Heart right ventricle (tissue), 16 donors: ENCODE measurements at regions of chr5 and their contacts with region 1.

Region 1: GRCh38 chr5:141320225-141321169 is at the start of gene TAF7:
- DNase-seq: peak; percentile 90 to 93
- ATAC-seq: peak; percentile 99 to 100 (median 100)
- H3K4me3 ChIP-seq: peak within 1 kb of the TSS; percentile 56 to 96 (median 72)
- H3K27ac ChIP-seq: peak within 1 kb of the TSS; percentile 87 to 99 (median 92)
- H3K4me1 ChIP-seq: peaks cover 0 to 23% (median 13%) of the 10 kb centered on the region in 9 donors
- H3K27me3 ChIP-seq: no peaks in the 10 kb centered on the region
- CTCF ChIP-seq: peak; percentile 79 to 92 (median 87)
- total RNA-seq, gene TAF7: 93.4 to 111 (median 107) TPM

Region 2: DNA sequence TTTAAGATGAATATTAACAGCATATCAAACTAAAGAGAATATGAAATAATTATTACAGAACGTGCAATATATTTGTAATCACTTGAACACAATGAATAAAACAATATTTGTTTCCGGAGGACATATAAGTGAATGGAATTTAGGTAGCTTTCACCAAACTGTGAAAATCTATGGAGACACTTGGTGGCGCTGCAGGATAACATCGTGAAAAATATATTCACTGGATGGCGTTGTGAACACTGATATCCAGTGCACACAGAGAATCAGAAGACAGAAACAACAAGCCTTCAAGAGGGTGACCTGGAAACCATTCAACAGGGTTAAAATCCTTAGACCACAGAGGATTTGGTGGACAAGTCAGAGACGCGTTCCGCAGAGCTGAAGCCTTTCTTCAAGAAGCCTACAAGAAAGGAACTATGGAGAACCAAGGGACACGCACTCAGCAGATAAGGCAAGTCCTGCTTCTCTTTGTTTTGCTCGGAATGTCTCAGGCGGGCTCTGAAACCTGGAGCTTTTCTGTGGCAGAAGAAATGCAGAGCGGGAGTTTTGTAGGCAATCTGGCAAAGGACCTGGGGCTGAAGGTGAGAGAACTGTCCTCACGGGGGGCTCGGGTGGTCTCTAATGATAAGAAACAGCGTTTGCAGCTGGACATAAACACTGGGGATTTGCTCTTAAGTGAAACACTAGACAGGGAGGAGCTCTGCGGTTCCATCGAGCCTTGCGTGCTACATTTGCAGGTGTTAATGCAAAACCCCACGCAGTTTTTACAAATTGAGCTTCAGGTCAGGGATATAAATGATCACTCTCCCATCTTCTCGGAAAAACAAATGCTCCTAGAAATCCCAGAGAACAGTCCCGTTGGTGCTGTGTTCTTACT is 120.9 kb before region 1 on chr5 and contains the start of gene PCDHB11:
- intact Hi-C with region 1: loop called in 1 of 10 experiments (anchors 10 kb)
- DNase-seq: no peak
- ATAC-seq: no peak
- H3K4me3 ChIP-seq: peak within 1 kb of the TSS in 6 of 10 donors; percentile 1 to 20 (median 15)
- H3K27ac ChIP-seq: no peak within 1 kb of the TSS
- H3K4me1 ChIP-seq: no peaks in the 10 kb centered on the region
- H3K27me3 ChIP-seq: peaks cover 0 to 20% (median 9%) of the 10 kb centered on the region in 7 donors
- CTCF ChIP-seq: peak in 4 of 9 donors; percentile 4 to 19 (median 18)
- total RNA-seq, gene PCDHB11: 0.64 to 2.8 (median 1.4) TPM

Region 3: GRCh38 chr5:141245250-141245717 is 75.2 kb before region 1 on chr5 and contains the start of gene PCDHB15:
- intact Hi-C with region 1: loop called in 2 of 10 experiments (anchors 10 kb)
- DNase-seq: peak in 1 of 2 donors; percentile 37
- ATAC-seq: peak; percentile 20 to 62 (median 46)
- H3K4me3 ChIP-seq: peak within 1 kb of the TSS; percentile 12 to 59 (median 44)
- H3K27ac ChIP-seq: peak within 1 kb of the TSS in 2 of 10 donors; percentile 17 to 60
- H3K4me1 ChIP-seq: no peaks in the 10 kb centered on the region
- H3K27me3 ChIP-seq: peaks cover 0 to 29% (median 13%) of the 10 kb centered on the region in 7 donors
- CTCF ChIP-seq: peak; percentile 15 to 61 (median 47)
- total RNA-seq, gene PCDHB15: 3.3 to 10.5 (median 5.2) TPM

Region 4: GRCh38 chr5:141650851-141651727 is 330.6 kb after region 1 on chr5 and contains the start of gene FCHSD1:
- intact Hi-C with region 1: no loop called
- DNase-seq: peak; percentile 88 to 92
- ATAC-seq: peak; percentile 88 to 97 (median 95)
- H3K4me3 ChIP-seq: peak within 1 kb of the TSS; percentile 35 to 70 (median 58)
- H3K27ac ChIP-seq: peak within 1 kb of the TSS in 7 of 10 donors; percentile 26 to 87 (median 44)
- H3K4me1 ChIP-seq: peaks cover 0 to 17% (median 3%) of the 10 kb centered on the region in 9 donors
- H3K27me3 ChIP-seq: no peaks in the 10 kb centered on the region
- CTCF ChIP-seq: peak in 4 of 9 donors; percentile 9 to 51 (median 34)
- total RNA-seq, gene FCHSD1: 1.2 to 6.5 (median 2.6) TPM

Region 5: DNA sequence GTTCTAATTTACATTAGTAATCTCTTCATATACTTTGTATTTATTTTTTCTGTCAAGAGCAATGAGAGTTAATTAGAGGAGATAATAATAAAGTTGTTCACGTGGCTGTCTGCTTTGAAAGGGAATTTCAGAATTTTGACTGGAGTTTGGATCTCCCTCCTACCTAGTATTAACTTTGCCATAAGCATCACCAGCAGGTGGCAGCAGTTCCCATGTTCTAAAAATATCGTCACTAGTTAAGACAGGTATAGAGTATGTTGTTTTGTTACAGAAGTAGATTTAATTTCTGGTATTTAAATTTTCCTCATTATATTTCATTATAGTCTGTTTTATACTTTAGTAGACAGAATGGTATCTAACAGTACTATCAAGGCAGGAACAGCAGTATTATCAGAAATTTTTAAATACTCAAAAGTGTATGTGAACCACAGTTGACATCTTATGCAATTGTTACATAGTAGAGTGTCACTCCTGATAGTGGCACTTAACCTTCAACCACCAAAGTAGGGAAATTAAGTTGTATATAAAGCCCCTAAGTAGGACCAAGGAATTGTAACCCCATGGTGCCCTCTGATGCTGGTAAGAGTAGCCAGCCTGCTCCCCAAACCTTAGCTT is 672.0 kb after region 1 on chr5:
- intact Hi-C with region 1: no loop called
- DNase-seq: peak; percentile 51 to 76
- ATAC-seq: peak; percentile 61 to 85 (median 79)
- H3K4me3 ChIP-seq: no peak overlapping the region
- H3K27ac ChIP-seq: no peak overlapping the region
- H3K4me1 ChIP-seq: peaks cover 0 to 24% (median 7%) of the 10 kb centered on the region in 9 donors
- H3K27me3 ChIP-seq: no peaks in the 10 kb centered on the region
- CTCF ChIP-seq: peak; percentile 63 to 89 (median 81)

Region 6: DNA sequence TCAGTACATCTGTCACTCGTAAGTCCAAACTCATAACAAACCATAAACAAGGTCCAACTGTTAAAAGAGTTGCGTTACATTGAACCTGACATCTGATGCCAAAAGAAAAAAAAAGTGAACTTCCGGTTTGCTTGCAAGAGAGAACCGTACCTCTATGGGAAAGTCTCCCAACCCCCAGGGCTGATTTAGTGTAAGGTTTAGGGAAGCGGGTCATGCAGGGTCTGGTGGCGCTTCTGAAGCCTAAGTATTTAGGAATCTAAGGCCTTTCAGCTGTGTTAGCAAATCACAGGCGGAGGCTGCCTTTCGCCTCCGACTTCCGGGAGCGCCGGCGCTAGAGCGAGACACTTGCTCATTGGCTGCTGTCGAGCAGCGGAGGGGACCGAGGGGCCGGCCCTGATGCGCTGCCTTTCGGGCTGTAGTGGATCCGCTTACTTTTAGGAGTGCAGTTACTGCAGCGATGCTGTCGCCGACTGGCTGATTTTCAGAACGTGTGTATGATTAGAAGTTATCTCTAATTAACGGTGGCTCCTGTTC is 704.3 kb after region 1 on chr5:
- intact Hi-C with region 1: no loop called
- DNase-seq: peak; percentile 85 to 88
- ATAC-seq: peak; percentile 98 to 100 (median 100)
- H3K4me3 ChIP-seq: peak overlapping the region; percentile 17 to 61 (median 54)
- H3K27ac ChIP-seq: peak overlapping the region in 9 of 10 donors; percentile 73 to 90 (median 87)
- H3K4me1 ChIP-seq: peaks cover 0 to 12% (median 5%) of the 10 kb centered on the region in 9 donors
- H3K27me3 ChIP-seq: no peaks in the 10 kb centered on the region
- CTCF ChIP-seq: no peak